Panc1 (cell line): ENCODE measurements at regions of chr4 and their contacts with region 1.

Region 1: DNA sequence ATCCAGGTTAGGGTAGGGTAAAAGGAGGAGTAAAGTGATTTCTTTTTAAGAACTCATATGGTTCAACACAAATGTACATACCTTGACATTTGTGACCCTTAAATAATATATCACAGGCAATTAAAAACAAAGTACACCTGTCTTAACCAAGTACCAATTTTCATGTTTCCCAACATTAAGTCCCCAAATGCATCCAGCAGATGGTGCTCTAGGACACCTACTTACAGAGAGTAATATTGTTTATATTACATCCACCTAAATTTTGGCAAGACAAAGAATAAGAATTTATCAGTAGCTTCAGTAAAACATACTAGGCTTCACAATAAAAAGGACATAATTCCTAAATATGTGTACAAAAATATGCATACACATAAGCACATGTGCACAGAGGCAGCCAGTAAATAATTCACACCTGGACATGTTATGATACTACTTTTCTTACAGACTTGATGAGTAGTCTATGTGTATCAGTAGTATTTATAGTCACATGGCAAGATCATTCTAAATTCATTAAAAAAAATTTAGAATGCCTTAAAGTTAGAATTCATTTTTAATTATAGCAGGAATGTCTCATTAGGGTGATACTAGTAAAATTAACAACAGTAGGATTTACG is 219.7 kb downstream of the DCLK2 start:
- DNase-seq: no peak
- ATAC-seq: peak; percentile 75; the same call in 1 of the 2 replicates
- H3K4me3 ChIP-seq: no peak overlapping the region
- H3K27ac ChIP-seq: no peak overlapping the region
- H3K4me1 ChIP-seq: no peaks in the 10 kb centered on the region
- H3K27me3 ChIP-seq: no peaks in the 10 kb centered on the region
- CTCF ChIP-seq: peak; percentile 66; the same call in 1 of the 2 replicates

Region 2: DNA sequence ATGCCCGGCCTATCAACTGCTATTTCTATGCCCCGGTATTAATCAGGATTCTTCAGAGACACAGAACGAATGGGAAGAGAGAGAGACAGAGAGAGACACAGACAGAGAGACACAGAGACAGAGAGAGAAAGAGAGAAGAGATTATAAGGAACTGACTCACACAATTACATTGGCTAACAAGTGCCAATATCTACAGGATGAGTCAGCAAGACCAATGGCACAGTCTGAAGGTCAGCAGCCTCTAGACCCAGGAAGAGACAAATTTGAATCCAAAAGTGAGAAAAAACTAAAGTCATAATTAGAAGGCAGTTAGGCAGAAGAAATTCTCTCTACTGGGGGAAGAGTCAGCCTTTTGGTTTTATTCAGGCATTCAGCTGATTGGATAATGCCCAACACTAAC is 471.3 kb after region 1 on chr4:
- CTCF ChIA-PET with region 1: interaction called, 15 read pairs
- POLR2A ChIA-PET with region 1: no interaction called
- in situ Hi-C with region 1: no loop called
- intact Hi-C with region 1: no loop called
- DNase-seq: peak; percentile 13
- ATAC-seq: no peak; the same call in 1 of the 2 replicates
- H3K4me3 ChIP-seq: no peak overlapping the region
- H3K27ac ChIP-seq: no peak overlapping the region
- H3K4me1 ChIP-seq: no peaks in the 10 kb centered on the region
- H3K27me3 ChIP-seq: no peaks in the 10 kb centered on the region
- CTCF ChIP-seq: no peak

Region 3: GRCh38 chr4:150867148-150867547 is 569.2 kb after region 1 on chr4:
- CTCF ChIA-PET with region 1: no interaction called
- POLR2A ChIA-PET with region 1: no interaction called
- in situ Hi-C with region 1: no loop called
- intact Hi-C with region 1: loop called (anchors 2 kb)
- DNase-seq: no peak
- ATAC-seq: peak; percentile 80
- H3K4me3 ChIP-seq: no peak overlapping the region
- H3K27ac ChIP-seq: no peak overlapping the region
- H3K4me1 ChIP-seq: no peaks in the 10 kb centered on the region; the same call in 1 of the 2 replicates
- H3K27me3 ChIP-seq: no peaks in the 10 kb centered on the region
- CTCF ChIP-seq: peak; percentile 52; the same call in 1 of the 2 replicates